Right lobe of liver (tissue), 6 donors: ENCODE measurements at regions of chr2 and their contacts with region 1.

Region 1: DNA sequence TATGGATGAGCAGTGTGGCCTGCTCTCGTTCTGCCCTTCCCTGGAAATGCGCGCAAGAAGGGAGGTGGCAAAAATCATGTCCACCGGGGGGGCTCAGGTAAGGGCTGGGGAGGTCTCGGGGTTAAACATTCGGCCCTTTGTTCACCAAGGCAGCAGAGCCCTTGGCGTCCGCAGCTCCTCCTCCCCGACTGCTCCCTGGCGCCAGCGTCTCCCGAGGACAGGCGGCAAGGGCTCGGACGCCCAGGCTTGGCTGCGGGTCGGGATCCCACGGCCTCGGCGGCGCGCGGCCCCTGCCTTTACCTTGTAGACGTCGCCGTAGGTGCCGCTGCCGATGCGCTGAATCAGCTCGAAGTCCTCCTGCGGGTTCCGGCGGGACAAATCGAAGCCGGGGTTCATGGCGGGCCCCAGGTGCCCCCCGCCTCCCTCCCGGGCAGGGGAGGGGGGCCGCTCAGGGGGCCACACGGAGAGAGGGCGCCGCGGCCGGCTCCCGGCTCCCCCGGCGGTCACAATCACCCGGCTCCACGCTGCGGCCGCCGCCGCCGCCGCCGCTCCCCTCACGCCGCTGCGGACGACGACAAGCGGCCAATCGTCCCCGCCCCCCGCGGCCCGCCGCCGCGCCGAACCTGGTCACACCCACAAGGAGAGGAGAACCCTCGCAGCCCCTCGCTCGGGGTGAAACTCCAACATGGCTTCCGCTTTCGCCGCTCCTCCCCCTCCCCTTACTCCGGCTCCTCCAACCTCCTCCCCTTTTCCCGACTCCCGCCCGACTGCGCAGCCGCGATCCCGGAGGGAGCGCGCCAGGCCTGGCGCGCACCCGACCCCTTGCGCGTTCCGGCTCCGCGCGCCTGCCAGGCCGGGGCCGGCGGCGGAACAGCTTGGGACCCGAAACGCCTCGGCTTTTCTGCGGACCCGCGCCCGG is at the start of gene MAP4K3:
- DNase-seq: peak; percentile 94 to 96 (median 94)
- ATAC-seq: peak; percentile 82 to 91 (median 88)
- H3K4me3 ChIP-seq: peak within 1 kb of the TSS; percentile 81 to 89 (median 87)
- H3K27ac ChIP-seq: peak within 1 kb of the TSS; percentile 90 to 96 (median 95)
- H3K4me1 ChIP-seq: peaks cover 0 to 39% (median 9%) of the 10 kb centered on the region in 4 donors
- H3K27me3 ChIP-seq: no peaks in the 10 kb centered on the region
- CTCF ChIP-seq: no peak
- POLR2A ChIP-seq: peak; percentile 89
- total RNA-seq, gene MAP4K3: 14.5 to 24.8 (median 17.1) TPM

Region 2: DNA sequence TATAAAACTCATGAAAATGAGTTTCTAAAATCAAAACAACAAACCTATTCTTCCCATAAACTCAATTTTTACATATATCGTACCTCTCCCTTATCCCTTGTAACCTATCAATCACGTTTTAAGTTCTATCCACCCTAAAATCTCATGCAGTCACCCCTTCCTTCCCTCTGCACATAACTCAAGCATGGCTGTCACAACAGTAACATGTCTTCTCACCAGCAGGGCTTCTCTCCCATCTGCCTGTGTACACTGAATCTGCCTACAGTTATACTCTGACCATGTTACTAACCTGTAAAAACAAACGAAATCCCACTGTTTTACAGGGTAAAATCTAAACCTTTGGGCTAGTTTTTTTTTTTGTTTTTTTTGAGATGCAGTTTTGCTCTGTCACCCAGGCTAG is 68.0 kb before region 1 on chr2:
- intact Hi-C with region 1: no loop called
- DNase-seq: no peak
- ATAC-seq: no peak
- H3K4me3 ChIP-seq: no peak overlapping the region
- H3K27ac ChIP-seq: no peak overlapping the region
- H3K4me1 ChIP-seq: no peaks in the 10 kb centered on the region
- H3K27me3 ChIP-seq: no peaks in the 10 kb centered on the region
- CTCF ChIP-seq: no peak
- POLR2A ChIP-seq: no peak

Region 3: DNA sequence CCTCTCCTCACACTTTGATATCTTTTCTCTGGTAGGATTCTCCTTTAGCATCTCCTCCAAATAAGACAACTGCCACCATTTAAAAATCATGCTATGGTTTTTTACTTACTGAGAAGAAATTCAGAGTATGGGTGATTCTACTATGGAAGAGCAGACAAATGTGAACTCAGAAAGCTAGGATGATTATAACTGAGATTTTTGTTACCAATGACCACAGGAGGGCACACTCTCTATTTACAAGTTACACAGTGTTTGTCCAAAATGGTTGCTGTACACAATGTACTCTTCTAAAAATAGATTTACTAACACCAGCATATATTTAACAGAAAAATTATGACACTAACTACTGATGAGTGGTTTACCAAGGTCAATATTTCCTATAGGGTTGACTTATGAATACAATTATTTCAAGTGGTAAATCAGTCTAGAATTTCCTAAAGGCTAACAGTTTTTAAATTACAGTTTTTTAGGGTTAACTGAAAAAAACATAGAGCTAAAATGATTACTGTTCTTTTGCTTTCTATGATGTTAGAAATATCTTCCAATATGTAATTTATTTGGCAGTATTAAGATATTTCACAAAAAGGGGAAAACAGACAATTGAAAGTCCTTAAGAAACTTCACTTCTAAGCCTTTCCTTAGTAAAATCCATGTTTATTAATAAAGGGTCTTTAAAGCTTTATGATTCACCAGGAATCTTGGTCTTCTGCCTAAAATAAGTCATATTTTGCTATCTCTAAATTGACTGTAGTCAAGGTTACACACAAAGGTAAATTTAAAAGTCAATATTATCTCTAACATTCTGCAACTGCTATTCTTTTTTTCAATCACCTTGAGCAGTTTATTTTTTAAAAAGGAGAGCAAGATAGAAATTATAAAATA is 57.0 kb before region 1 on chr2:
- intact Hi-C with region 1: loop called in 1 of 2 experiments (anchors 10 kb)
- DNase-seq: no peak
- ATAC-seq: peak; percentile 91 to 97 (median 92)
- H3K4me3 ChIP-seq: no peak overlapping the region
- H3K27ac ChIP-seq: peak overlapping the region in 2 of 3 donors; percentile 52 to 66
- H3K4me1 ChIP-seq: peaks cover 0 to 26% (median 9%) of the 10 kb centered on the region in 4 donors
- H3K27me3 ChIP-seq: no peaks in the 10 kb centered on the region
- CTCF ChIP-seq: peak; percentile 54 to 74 (median 60)
- POLR2A ChIP-seq: no peak